ENCODE measurements at regions of chr20 and their contacts with region 1.

Region 1: GRCh38 chr20:12970372-12970821 is 38.4 kb upstream of the SPTLC3 start:
- DNase-seq: peak; percentile 14 to 32
- H3K4me3 ChIP-seq: no peak overlapping the region
- H3K27ac ChIP-seq: no peak overlapping the region
- H3K4me1 ChIP-seq: no peaks in the 10 kb centered on the region
- H3K27me3 ChIP-seq: no peaks in the 10 kb centered on the region
- CTCF ChIP-seq: peak; percentile 23 to 87 (median 58)
- POLR2A ChIP-seq: no peak

Region 2: DNA sequence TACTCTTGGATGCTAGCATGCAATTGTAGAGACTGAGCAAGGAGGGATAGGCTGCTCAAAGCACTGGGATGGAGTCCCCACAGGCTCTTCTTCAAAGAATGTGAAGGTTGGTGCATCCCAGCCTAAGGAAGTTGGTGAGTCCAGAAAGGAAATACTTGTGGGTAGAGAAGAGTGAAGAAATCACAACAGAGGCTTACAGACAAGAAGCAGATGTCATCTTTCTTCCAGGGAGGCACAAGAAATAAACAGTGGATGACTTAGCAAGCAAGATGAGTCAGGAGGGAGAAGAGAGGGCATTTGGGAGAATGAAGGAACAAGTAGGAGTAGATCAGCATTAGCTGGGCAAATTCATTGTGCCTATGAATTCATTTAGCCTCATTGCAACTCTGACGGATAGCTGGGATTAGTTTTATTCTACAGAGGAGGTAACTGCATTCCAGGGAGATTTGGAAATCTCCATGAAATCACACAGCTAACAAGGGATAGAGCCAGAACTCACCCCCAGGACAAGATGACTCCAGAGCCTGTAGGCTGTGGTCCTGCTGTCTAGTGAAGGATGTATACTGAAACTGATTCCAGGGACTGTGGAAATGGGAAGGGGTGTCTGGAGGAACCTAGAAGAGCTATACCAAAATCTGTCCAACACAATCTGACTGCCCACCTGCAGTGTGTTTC is 87.4 kb before region 1 on chr20:
- intact Hi-C with region 1: no loop called
- DNase-seq: no peak
- H3K4me3 ChIP-seq: no peak overlapping the region
- H3K27ac ChIP-seq: no peak overlapping the region
- H3K4me1 ChIP-seq: no peaks in the 10 kb centered on the region
- H3K27me3 ChIP-seq: no peaks in the 10 kb centered on the region
- CTCF ChIP-seq: no peak
- POLR2A ChIP-seq: no peak

Region 3: DNA sequence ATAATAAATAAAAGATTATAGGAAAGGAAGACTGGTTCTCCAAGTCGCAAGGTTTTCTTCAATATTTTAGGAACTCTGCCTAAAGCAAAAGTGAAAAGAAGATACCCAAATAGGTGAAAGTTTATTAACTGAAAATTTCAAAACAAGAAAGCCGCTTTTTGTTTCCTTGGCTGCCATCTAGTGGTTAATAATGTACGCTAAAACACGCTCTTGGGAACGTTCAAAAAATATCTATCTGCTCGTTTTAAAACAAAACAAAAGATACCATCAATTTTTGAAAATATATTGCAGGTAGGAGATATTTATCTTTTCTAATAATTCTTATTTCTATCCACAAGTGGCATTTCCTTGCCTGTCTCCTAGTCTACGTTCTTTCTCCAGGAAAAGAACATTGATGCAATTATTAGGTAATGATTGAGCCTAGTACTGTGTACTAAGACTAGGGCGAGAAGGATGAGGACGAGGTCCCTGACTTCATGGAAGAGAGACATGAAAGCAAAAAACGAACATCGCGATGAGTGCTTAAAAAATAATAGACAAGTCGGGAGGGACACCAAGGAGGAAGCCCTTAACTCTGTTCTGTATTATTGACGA is 135.6 kb after region 1 on chr20:
- intact Hi-C with region 1: loop called (anchors 5 kb)
- DNase-seq: no peak
- H3K4me3 ChIP-seq: no peak overlapping the region
- H3K27ac ChIP-seq: no peak overlapping the region
- H3K4me1 ChIP-seq: peaks cover 0 to 8% of the 10 kb centered on the region in 2 donors
- H3K27me3 ChIP-seq: no peaks in the 10 kb centered on the region
- CTCF ChIP-seq: peak in 5 of 6 experiments; percentile 39 to 78 (median 65)
- POLR2A ChIP-seq: no peak

Measured in thyroid gland (tissue), 4 donors.